Panc1 (cell line): ENCODE measurements at regions of chr1 and their contacts with region 1.

Region 1: GRCh38 chr1:165152727-165153126 is 203.8 kb downstream of the LMX1A start:
- DNase-seq: no peak
- ATAC-seq: 0 out of 2 replicates have a peak, but pooled peaks have one; percentile 66
- H3K4me3 ChIP-seq: no peak overlapping the region
- H3K27ac ChIP-seq: no peak overlapping the region
- H3K4me1 ChIP-seq: no peaks in the 10 kb centered on the region
- H3K27me3 ChIP-seq: no peaks in the 10 kb centered on the region; the same call in none of the 2 replicates
- CTCF ChIP-seq: peak; percentile 57

Region 2: GRCh38 chr1:164780863-164781262 is 371.9 kb before region 1 on chr1:
- CTCF ChIA-PET with region 1: no interaction called
- POLR2A ChIA-PET with region 1: no interaction called
- in situ Hi-C with region 1: no loop called
- intact Hi-C with region 1: no loop called
- DNase-seq: no peak
- ATAC-seq: no peak
- H3K4me3 ChIP-seq: no peak overlapping the region
- H3K27ac ChIP-seq: no peak overlapping the region
- H3K4me1 ChIP-seq: no peaks in the 10 kb centered on the region
- H3K27me3 ChIP-seq: no peaks in the 10 kb centered on the region
- CTCF ChIP-seq: no peak

Region 3: DNA sequence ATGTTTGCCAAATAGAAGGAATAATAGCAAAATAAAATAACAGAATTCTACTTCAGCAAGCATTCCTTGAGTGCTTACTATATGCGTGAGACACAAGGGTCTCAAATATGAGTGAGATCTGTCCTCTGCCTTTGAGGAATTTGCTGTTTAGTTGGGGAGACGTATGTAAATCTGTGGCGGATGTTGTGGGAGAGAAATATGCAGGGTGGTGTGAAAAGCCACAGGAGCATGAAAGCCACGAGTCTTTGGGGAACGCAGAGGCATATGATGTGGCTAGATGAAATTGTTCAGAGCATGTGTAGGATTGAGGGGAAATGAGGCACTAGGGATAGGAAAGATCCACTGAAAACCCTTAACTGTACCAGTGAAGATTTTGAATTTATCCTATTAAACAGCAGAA is 349.4 kb before region 1 on chr1:
- CTCF ChIA-PET with region 1: no interaction called
- POLR2A ChIA-PET with region 1: no interaction called
- in situ Hi-C with region 1: no loop called
- intact Hi-C with region 1: no loop called
- DNase-seq: no peak
- ATAC-seq: no peak
- H3K4me3 ChIP-seq: no peak overlapping the region
- H3K27ac ChIP-seq: no peak overlapping the region
- H3K4me1 ChIP-seq: no peaks in the 10 kb centered on the region
- H3K27me3 ChIP-seq: no peaks in the 10 kb centered on the region
- CTCF ChIP-seq: no peak

Region 4: GRCh38 chr1:164922585-164922984 is 230.1 kb before region 1 on chr1:
- CTCF ChIA-PET with region 1: no interaction called
- POLR2A ChIA-PET with region 1: no interaction called
- in situ Hi-C with region 1: no loop called
- intact Hi-C with region 1: no loop called
- DNase-seq: no peak
- ATAC-seq: no peak
- H3K4me3 ChIP-seq: no peak overlapping the region
- H3K27ac ChIP-seq: no peak overlapping the region
- H3K4me1 ChIP-seq: no peaks in the 10 kb centered on the region
- H3K27me3 ChIP-seq: no peaks in the 10 kb centered on the region; the same call in 1 of the 2 replicates
- CTCF ChIP-seq: no peak

Region 5: GRCh38 chr1:165903672-165904071 is 750.9 kb after region 1 on chr1:
- CTCF ChIA-PET with region 1: no interaction called
- POLR2A ChIA-PET with region 1: no interaction called
- in situ Hi-C with region 1: no loop called
- intact Hi-C with region 1: no loop called
- DNase-seq: no peak
- ATAC-seq: no peak
- H3K4me3 ChIP-seq: no peak overlapping the region
- H3K27ac ChIP-seq: no peak overlapping the region
- H3K4me1 ChIP-seq: no peaks in the 10 kb centered on the region
- H3K27me3 ChIP-seq: no peaks in the 10 kb centered on the region
- CTCF ChIP-seq: no peak

Region 6: DNA sequence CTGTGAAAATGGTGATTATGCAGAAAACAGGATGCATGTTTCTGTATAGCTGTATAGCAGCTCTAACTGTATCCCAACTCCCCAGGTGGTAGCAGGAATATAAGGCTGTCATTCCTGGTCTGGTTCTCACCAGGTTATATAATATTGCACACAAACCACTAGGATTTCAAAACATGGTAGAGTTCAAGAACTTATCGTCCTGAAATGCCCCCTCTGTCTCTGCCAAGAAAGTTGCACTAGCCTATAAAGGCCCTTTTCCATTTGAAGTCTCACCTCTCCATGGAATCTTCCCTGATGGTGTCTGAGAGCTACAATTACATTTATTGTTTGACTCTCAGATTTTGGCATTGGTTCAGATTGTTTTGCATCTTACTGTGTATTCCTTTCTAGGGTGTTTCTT is 1198.9 kb after region 1 on chr1:
- CTCF ChIA-PET with region 1: no interaction called
- POLR2A ChIA-PET with region 1: interaction called, 12 read pairs
- in situ Hi-C with region 1: no loop called
- intact Hi-C with region 1: no loop called
- DNase-seq: no peak
- ATAC-seq: no peak
- H3K4me3 ChIP-seq: no peak overlapping the region
- H3K27ac ChIP-seq: no peak overlapping the region
- H3K4me1 ChIP-seq: no peaks in the 10 kb centered on the region
- H3K27me3 ChIP-seq: no peaks in the 10 kb centered on the region
- CTCF ChIP-seq: no peak